Activated B cell treated with CpG ODN at 0.5 μM for 24 hours (primary cell): ENCODE measurements at regions of chr18 and their contacts with region 1.

Region 1: DNA sequence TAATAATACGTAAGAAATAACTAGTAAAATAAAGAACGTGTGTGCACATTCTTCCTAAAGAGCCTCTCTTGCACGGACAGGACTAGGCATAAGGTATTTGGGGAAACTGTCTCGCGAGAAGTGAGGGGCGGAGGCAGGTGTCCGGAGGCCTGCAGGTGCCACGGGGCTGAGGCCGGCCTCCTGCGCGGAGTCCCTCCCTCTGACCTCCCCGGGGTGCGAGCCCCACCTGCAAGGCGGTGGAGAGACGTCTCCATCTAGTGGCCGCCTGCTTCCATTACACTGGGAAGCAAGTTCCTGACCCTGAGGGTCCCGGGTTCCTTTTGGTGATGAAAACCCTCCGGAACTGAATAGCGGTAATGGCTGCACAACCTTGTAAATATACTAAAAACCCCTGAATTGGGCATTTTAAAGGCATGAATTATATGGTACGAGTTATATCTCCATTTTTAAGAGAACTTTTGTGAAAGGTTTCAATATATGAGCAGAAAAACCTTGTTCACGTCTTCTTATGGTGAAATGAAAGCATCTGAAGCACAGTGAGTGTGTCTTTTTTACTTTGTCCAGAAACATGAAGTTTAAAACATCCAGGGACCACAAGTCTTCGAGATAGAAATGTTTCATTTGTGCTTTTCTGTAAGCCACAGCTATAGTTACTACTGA is 35.5 kb upstream of the CTDP1 start:
- DNase-seq: peak; percentile 68
- ATAC-seq: peak; percentile 93
- H3K4me3 Mint-ChIP-seq: no peak overlapping the region
- H3K27ac Mint-ChIP-seq: no peak overlapping the region
- H3K4me1 Mint-ChIP-seq: peaks cover 24% of the 10 kb centered on the region
- H3K27me3 Mint-ChIP-seq: no peaks in the 10 kb centered on the region
- CTCF ChIP-seq: peak; percentile 97

Region 2: GRCh38 chr18:78984941-78985784 is 659.0 kb before region 1 on chr18:
- CTCF ChIA-PET with region 1: no interaction called
- POLR2A ChIA-PET with region 1: no interaction called
- intact Hi-C with region 1: loop called (anchors 10 kb)
- DNase-seq: no peak
- ATAC-seq: no peak
- H3K4me3 Mint-ChIP-seq: no peak overlapping the region
- H3K27ac Mint-ChIP-seq: no peak overlapping the region
- H3K4me1 Mint-ChIP-seq: peaks cover 9% of the 10 kb centered on the region
- H3K27me3 Mint-ChIP-seq: peaks cover 54% of the 10 kb centered on the region
- CTCF ChIP-seq: no peak

Region 3: DNA sequence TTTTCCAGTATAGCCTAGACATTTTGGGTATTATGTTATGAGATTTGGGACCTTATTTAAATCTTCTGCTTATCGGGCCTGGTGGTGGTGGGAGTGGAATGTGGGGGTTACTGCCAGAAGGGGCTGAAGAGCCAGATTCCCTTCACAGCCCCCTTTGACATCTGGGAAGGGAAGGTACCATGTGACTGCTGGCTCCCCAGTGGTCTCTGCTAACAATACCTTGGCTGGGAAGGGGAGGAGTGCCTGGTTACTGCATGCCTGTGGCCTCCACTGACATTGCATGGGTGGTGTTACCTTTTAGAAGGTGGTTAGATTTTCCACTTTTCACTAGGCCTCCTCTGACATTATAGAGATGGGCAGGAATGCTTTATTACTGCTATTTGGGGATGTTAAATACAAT is 567.0 kb before region 1 on chr18:
- CTCF ChIA-PET with region 1: no interaction called
- POLR2A ChIA-PET with region 1: no interaction called
- intact Hi-C with region 1: no loop called
- DNase-seq: no peak
- ATAC-seq: no peak
- H3K4me3 Mint-ChIP-seq: no peak overlapping the region
- H3K27ac Mint-ChIP-seq: no peak overlapping the region
- H3K4me1 Mint-ChIP-seq: peaks cover 28% of the 10 kb centered on the region
- H3K27me3 Mint-ChIP-seq: no peaks in the 10 kb centered on the region
- CTCF ChIP-seq: no peak

Region 4: DNA sequence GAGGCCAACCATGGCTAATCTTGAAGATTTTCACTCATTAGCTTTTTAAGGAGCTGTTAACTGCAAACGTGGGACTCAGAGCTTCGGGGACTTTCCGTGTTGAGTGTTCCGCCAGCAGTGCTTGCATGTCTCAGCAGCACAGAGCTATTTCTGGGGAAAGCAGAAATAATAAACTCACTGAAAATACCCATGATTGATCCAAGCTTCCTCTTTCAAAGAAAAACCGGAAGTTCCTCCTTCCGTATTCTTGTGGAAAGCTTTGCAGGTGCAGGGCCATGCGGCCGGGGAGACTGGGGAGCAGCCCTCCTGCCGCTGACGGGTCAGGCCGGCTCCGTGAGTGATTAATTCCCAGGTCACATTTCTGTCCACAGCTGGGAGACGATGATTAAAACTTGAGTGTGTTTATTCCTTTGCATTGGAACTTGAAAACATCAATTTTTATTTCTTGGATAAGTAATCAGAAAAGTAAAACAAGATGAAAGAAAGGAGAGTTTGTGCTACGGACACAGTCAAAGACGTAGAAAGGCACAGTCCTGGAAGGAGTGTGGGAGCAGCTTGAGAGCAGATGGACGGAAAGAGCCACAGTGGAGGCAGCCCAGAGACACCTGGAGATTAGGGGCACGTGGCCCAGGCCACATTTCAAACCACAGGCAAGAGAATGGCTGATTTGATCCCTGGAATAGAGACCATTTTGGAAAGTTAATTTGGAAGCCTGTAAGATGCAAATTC is 18.8 kb before region 1 on chr18:
- CTCF ChIA-PET with region 1: interaction called, 11 read pairs
- POLR2A ChIA-PET with region 1: interaction called, 3 read pairs
- intact Hi-C with region 1: no loop called
- DNase-seq: peak; percentile 42
- ATAC-seq: peak; percentile 85
- H3K4me3 Mint-ChIP-seq: peak overlapping the region; percentile 73
- H3K27ac Mint-ChIP-seq: peak overlapping the region; percentile 79
- H3K4me1 Mint-ChIP-seq: peaks cover 51% of the 10 kb centered on the region
- H3K27me3 Mint-ChIP-seq: no peaks in the 10 kb centered on the region
- CTCF ChIP-seq: no peak